T-cell (primary cell): ENCODE measurements at regions of chr12 and their contacts with region 1.

Region 1: DNA sequence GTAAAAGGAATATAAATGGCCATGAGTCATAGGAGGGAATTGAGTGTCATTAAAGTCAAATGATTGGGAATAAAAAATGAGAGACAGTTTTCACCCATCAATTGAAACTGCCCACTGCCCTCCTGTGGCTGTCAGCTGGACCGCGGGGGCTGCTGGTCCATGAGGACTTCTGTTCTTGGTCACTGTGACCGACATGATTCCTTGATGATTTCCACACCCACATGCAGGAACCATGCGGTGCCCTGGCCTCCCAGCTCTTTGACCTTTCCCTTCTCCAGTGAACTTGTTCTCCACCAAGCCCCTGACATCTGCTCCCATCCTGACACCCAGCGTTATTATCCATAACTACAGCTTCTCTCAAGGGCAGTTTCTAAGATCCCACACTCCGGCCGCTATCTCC is 48.4 kb downstream of the C12orf75 start:
- DNase-seq: no peak
- ATAC-seq: no peak
- H3K4me3 ChIP-seq: no peak overlapping the region
- H3K4me3 Mint-ChIP-seq: no peak overlapping the region
- H3K27ac ChIP-seq: no peak overlapping the region
- H3K27ac Mint-ChIP-seq: no peak overlapping the region
- H3K4me1 ChIP-seq: peaks cover 0 to 3% of the 10 kb centered on the region in 2 experiments
- H3K4me1 Mint-ChIP-seq: peaks cover 0 to 4% (median 0%) of the 10 kb centered on the region in 3 donors
- H3K27me3 ChIP-seq: no peaks in the 10 kb centered on the region
- H3K27me3 Mint-ChIP-seq: no peaks in the 10 kb centered on the region

Region 2: DNA sequence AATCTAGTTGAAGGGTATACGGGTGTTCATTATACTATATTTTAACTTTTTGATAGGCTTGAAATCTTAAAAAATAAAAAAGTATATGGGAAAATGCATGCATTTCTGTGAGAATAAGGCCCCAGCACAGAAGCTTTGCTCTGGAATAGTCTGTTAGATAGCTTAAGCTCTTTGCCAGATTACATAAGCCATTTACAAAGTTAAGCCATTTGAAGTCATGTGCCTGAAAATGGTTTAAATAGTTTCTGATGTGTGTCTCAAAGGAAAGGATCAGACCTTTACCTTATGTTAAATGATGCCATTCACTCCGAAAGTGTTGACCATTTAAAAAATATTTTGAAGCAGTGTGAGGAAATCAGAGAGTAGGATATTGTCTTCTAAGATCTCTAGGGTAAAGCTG is 220.0 kb before region 1 on chr12:
- CTCF ChIA-PET with region 1: no interaction called
- POLR2A ChIA-PET with region 1: no interaction called
- DNase-seq: no peak
- ATAC-seq: no peak
- H3K4me3 ChIP-seq: no peak overlapping the region
- H3K4me3 Mint-ChIP-seq: no peak overlapping the region
- H3K27ac ChIP-seq: no peak overlapping the region
- H3K27ac Mint-ChIP-seq: no peak overlapping the region
- H3K4me1 ChIP-seq: no peaks in the 10 kb centered on the region
- H3K4me1 Mint-ChIP-seq: no peaks in the 10 kb centered on the region
- H3K27me3 ChIP-seq: no peaks in the 10 kb centered on the region
- H3K27me3 Mint-ChIP-seq: no peaks in the 10 kb centered on the region

Region 3: GRCh38 chr12:105285378-105285777 is 93.5 kb before region 1 on chr12:
- CTCF ChIA-PET with region 1: interaction called in 1 of 2 experiments, 11 read pairs
- POLR2A ChIA-PET with region 1: no interaction called
- DNase-seq: no peak
- ATAC-seq: no peak
- H3K4me3 ChIP-seq: no peak overlapping the region
- H3K4me3 Mint-ChIP-seq: no peak overlapping the region
- H3K27ac ChIP-seq: no peak overlapping the region
- H3K27ac Mint-ChIP-seq: no peak overlapping the region
- H3K4me1 ChIP-seq: no peaks in the 10 kb centered on the region
- H3K4me1 Mint-ChIP-seq: no peaks in the 10 kb centered on the region
- H3K27me3 ChIP-seq: no peaks in the 10 kb centered on the region
- H3K27me3 Mint-ChIP-seq: peaks cover 0 to 11% of the 10 kb centered on the region in 2 donors

Region 4: GRCh38 chr12:105590541-105590940 is 211.6 kb after region 1 on chr12:
- CTCF ChIA-PET with region 1: no interaction called
- POLR2A ChIA-PET with region 1: no interaction called
- DNase-seq: no peak
- ATAC-seq: no peak
- H3K4me3 ChIP-seq: no peak overlapping the region
- H3K4me3 Mint-ChIP-seq: no peak overlapping the region
- H3K27ac ChIP-seq: no peak overlapping the region
- H3K27ac Mint-ChIP-seq: no peak overlapping the region
- H3K4me1 ChIP-seq: no peaks in the 10 kb centered on the region
- H3K4me1 Mint-ChIP-seq: no peaks in the 10 kb centered on the region
- H3K27me3 ChIP-seq: peaks cover 0 to 3% of the 10 kb centered on the region in 2 experiments
- H3K27me3 Mint-ChIP-seq: peaks cover 0 to 5% of the 10 kb centered on the region in 2 donors

Region 5: GRCh38 chr12:106090591-106091411 is 711.9 kb after region 1 on chr12:
- CTCF ChIA-PET with region 1: no interaction called
- POLR2A ChIA-PET with region 1: no interaction called
- DNase-seq: no peak
- ATAC-seq: no peak
- H3K4me3 ChIP-seq: no peak overlapping the region
- H3K4me3 Mint-ChIP-seq: no peak overlapping the region
- H3K27ac ChIP-seq: no peak overlapping the region
- H3K27ac Mint-ChIP-seq: no peak overlapping the region
- H3K4me1 ChIP-seq: no peaks in the 10 kb centered on the region
- H3K4me1 Mint-ChIP-seq: no peaks in the 10 kb centered on the region
- H3K27me3 ChIP-seq: peaks cover 0 to 9% of the 10 kb centered on the region in 2 experiments
- H3K27me3 Mint-ChIP-seq: peaks cover 13 to 17% of the 10 kb centered on the region in 2 donors

Region 6: DNA sequence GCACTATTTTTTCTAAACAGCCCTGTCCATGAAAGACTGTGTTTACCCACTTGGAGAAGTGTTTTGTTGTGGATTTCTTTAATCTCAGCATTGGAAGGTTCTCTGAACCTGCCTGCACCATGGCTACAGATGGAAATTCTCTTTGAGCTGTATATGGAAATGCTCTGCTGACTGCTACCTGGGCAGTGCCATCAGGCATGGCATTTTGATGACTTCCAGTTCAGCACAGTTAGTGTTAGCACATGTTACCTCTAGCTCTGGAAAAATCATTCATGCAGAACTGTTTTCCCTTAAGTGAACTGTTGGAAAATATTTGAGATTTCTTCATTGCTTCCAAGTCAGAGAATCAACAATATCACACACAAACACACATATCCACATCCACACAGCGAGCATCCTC is 1343.0 kb after region 1 on chr12:
- CTCF ChIA-PET with region 1: interaction called in 1 of 2 experiments, 16 read pairs
- POLR2A ChIA-PET with region 1: no interaction called
- DNase-seq: no peak
- ATAC-seq: no peak
- H3K4me3 ChIP-seq: no peak overlapping the region
- H3K4me3 Mint-ChIP-seq: no peak overlapping the region
- H3K27ac ChIP-seq: no peak overlapping the region
- H3K27ac Mint-ChIP-seq: no peak overlapping the region
- H3K4me1 ChIP-seq: no peaks in the 10 kb centered on the region
- H3K4me1 Mint-ChIP-seq: peaks cover 0 to 11% (median 2%) of the 10 kb centered on the region in 3 donors
- H3K27me3 ChIP-seq: no peaks in the 10 kb centered on the region
- H3K27me3 Mint-ChIP-seq: no peaks in the 10 kb centered on the region